AG04450 (cell line): ENCODE measurements at regions of chr4 and their contacts with region 1.

Region 1: DNA sequence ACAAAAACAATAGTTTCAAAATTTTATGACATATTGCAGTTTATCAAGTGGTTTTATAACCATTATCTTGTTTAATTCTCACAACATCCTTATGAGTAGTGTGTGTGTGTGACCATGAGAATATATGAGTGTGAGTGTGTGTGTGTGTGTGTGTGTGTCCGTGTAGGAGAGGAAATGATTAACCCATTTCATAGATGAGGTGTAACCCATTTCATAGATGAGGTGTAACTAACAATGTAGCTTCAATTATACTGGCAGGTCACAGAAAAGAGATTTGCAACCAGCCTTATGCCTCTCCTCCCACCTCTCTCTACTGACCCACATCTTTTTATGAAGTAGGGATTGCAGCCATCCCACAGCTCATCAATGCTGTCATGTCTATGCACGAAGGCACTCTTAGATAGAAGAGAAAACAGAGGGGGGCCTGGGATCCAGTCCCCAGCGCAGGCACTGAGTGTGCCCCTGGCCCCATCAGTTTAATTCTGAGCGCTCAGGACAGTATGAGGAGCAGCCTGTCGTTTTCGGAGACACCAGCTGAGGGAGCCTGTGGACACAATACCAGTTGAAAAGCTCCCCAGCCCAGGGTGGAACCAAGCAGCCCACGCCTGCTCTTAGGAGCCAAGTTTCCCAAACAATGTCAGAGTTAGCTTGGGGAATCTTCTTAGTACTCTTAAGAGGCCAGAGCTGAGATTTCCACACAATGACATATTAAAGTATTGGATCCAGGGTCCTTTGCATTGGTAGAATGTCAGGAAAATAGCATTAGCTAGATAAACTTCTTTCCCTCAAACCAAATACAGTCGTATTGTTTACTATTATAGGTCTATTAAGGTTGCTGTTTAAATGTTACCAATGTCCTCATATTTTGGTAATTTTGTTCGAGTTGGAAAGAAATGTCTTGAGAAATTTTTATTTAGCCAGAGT is 88.6 kb downstream of the PALLD start:
- DNase-seq: peak; percentile 52
- H3K4me3 ChIP-seq: no peak overlapping the region
- H3K27ac ChIP-seq: no peak overlapping the region
- H3K27me3 ChIP-seq: no peaks in the 10 kb centered on the region
- CTCF ChIP-seq: peak; percentile 85

Region 2: DNA sequence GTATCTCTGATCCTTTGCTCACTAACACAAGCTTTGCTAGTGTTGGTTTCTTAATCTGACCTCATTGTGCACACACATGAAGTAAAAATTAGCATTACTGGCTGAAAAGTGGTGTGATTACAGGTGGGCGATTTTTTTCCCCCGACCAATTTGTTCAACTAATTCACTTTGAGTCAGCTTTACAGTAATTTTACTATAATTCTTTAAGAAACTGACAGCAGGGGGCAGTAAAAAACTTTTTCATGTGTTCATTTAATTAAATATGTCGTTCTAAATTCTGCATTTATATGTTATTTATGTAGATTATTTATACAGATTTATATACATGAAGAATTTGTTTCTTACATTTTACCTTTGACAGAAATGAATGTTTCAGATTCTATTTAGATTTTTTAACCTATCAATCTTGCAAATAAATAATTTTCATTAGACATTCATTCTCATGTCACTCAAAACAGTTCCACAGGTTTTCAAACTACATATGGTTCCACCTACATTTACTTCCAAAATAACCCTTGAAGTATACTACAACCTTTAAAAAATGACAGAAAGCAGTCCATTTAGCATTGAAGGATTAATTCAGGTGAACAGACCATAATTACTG is 71.1 kb before region 1 on chr4:
- CTCF ChIA-PET with region 1: interaction called, 16 read pairs
- POLR2A ChIA-PET with region 1: no interaction called
- DNase-seq: no peak
- H3K4me3 ChIP-seq: no peak overlapping the region
- H3K27ac ChIP-seq: no peak overlapping the region
- H3K27me3 ChIP-seq: no peaks in the 10 kb centered on the region
- CTCF ChIP-seq: peak; percentile 42

Region 3: GRCh38 chr4:168598191-168598590 is 12.8 kb after region 1 on chr4:
- CTCF ChIA-PET with region 1: interaction called, 14 read pairs
- POLR2A ChIA-PET with region 1: no interaction called
- DNase-seq: no peak
- H3K4me3 ChIP-seq: no peak overlapping the region
- H3K27ac ChIP-seq: no peak overlapping the region
- H3K27me3 ChIP-seq: no peaks in the 10 kb centered on the region
- CTCF ChIP-seq: no peak

Region 4: GRCh38 chr4:168631241-168632162 is 46.1 kb after region 1 on chr4:
- CTCF ChIA-PET with region 1: interaction called, 24 read pairs
- POLR2A ChIA-PET with region 1: interaction called, 3 read pairs
- DNase-seq: no peak
- H3K4me3 ChIP-seq: peak overlapping the region; percentile 78
- H3K27ac ChIP-seq: peak overlapping the region; percentile 61
- H3K27me3 ChIP-seq: no peaks in the 10 kb centered on the region
- CTCF ChIP-seq: peak; percentile 54

Region 5: DNA sequence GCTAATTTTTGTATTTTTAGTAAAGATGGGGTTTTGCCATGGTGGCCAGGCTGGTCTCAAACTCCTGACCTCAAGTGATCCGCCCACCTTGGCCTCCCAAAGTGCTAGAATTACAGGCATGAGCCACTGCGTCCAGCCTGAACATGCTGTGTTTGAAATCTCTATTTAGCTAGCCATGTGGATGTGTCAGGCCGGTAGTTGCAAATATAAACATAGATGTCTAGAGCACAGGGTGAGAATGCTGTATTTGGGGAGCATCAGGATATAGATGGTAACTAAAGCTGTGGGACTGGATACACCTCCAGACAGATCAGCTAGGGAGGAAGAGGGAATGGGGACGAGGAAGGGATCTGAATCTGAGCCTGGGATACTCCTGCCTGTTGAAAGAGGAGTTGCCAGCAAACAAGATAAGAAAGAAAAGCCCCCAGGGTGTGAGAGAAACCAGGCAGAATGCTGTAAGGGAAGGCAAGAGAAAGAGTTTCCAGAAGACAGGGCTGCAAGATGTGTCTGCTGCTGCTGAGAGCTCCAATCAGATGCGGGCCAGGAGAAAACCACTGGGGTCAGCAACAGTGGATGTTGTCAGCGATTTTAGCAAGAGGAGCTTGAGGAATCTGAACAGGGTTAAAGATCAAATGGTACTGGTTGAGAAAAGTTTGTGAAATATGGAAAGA is 88.8 kb after region 1 on chr4:
- CTCF ChIA-PET with region 1: interaction called, 18 read pairs
- POLR2A ChIA-PET with region 1: interaction called, 4 read pairs
- DNase-seq: no peak
- H3K4me3 ChIP-seq: no peak overlapping the region
- H3K27ac ChIP-seq: peak overlapping the region; percentile 47
- H3K27me3 ChIP-seq: no peaks in the 10 kb centered on the region
- CTCF ChIP-seq: no peak

Region 6: DNA sequence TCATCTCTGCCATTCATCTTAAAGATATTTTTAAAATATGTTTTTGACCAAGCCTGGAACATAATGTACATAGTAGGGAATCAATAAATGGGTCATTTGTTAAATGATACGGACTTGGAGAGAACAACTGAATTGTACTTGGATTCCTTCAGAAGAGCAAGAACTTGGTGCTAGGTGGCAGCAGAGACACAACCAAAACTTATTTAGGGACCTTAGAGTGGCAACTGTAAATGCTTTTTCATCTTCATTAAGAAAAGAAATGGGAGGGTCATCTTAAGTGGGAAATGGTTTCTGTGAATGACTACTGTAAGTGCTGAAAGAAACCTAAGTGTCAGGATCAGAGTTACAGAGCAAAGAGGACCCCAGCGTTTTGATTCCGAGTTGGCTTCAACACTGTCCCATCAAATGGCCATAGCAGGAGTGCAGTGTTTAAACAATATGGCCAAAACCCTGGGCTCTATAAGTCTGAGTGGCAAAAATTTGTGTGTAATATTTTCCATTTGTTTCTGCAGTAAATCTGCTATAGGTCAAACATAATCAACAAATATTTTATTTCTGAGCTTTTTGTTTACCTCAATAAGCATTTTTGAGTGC is 125.0 kb after region 1 on chr4:
- CTCF ChIA-PET with region 1: interaction called, 12 read pairs
- POLR2A ChIA-PET with region 1: no interaction called
- DNase-seq: peak; percentile 39
- H3K4me3 ChIP-seq: no peak overlapping the region
- H3K27ac ChIP-seq: no peak overlapping the region
- H3K27me3 ChIP-seq: no peaks in the 10 kb centered on the region
- CTCF ChIP-seq: peak; percentile 66

Region 7: DNA sequence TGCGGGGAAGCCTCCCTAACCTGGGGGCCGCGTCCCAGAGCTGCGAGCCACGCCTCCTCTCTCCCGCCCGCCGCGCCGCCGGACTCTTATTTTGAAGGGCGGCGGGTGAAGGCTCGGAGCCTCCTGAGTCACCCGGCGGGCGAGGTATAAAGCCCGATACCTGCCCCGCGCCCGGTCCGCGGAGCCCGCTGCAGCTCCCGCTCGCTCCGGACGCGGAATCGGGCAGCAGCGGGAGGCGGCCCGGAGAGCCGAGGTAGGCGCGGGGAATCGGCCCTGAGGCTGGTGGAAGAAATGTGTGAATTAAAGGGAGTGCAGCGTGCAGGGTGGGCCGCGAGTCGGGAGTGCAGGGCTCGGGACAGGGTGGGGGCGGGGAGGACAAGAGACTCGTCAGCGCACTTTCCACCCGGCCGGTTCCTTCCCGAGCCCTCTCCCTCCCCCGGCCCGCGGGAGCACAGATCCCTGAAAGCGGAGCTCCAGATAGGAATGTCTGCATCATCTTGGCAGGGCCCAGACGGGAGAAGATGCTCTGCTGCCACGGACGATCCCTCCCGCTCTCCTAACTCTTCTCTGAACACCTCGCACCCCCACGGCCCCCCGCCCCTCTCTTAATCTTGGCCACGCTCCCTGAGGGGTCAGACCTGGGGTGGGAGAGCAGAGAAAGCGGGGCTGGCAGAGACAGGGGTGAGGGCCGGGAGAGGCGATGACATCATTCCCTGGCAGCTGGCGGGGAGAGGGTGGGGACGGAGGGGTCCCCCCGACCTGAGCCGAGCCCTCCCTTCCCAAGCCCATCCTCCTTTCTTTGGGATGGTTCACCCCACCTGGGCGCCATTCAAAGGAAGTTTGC is 246.7 kb after region 1 on chr4:
- CTCF ChIA-PET with region 1: interaction called, 15 read pairs
- POLR2A ChIA-PET with region 1: interaction called, 16 read pairs
- DNase-seq: no peak
- H3K4me3 ChIP-seq: peak overlapping the region; percentile 84
- H3K27ac ChIP-seq: peak overlapping the region; percentile 94
- H3K27me3 ChIP-seq: no peaks in the 10 kb centered on the region
- CTCF ChIP-seq: no peak